Aorta (tissue), 5 donors: ENCODE measurements at regions of chr4 and their contacts with region 1.

Region 1: DNA sequence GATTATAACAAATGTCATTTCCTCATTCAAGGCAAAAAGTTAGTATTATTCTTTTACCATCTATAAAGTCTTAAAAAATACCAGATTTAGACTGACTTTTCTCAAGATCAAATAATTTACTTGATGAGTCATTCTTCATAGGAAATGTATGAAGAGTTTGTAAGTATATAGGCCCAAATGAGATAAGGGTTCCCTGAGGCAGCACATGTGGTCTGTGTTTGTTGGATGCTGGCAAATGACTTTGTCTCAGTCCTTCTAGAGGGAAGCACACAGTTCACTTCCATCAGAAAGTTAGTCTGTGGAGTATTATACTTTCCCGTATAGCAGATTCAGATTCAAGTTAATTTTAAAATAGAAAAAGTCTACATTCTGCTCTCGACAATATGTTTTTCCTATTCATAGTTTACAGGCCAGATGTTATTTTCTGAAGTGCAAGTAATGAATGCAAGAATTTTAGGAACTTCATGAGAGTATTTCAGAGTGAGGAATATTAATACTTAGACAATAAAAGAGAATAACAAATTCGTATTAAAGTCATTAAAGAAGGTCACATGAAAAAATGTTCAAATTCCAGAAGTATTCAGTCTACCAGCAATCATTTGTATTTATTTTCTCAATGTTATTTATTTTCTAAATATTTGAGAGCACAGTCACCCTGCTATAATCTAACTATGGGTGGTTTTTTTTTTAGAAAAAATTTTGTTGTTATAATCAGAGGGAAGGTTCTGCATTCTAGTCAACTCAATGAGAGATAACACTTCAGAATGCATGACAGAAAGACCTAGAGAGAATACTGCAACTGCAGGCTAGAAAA is 601.8 kb upstream of the ZFP42 start:
- DNase-seq: no peak
- ATAC-seq: no peak
- H3K4me3 ChIP-seq: no peak overlapping the region
- H3K27ac ChIP-seq: no peak overlapping the region
- H3K4me1 ChIP-seq: peaks cover 0 to 2% of the 10 kb centered on the region in 2 donors
- H3K27me3 ChIP-seq: no peaks in the 10 kb centered on the region

Region 2: DNA sequence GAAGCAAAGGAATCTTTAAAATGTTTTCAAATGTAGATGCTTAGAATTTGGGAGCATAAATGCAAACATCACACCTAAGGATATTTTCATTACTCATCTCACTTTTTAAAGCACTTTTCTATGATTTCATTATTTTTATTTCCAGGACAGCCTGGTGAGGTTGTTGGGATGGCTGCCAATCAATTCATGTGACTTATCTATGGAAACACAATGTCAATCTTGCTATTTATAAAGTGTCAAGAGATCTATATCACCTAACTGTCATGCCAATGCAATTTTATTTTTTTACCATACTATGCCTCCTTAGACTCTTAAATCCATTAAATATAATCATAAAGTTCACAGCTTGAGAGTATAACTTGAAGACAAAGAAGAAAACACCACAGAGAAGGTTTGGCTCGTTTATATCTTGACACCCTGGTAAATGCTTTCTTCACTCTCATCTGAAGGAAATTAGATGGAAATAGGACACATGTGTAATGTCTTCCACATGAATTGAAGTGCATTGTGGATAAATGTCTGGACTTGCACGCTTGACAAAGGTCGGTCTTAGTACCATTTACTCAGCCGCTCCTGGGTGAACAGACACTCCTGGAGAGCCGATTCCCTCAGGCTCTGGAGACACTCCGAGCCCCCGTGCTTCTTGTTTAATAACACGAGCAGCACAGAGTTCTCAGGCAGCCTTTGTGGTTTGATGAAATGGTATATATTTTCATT is 244.4 kb before region 1 on chr4:
- intact Hi-C with region 1: no loop called
- DNase-seq: no peak
- ATAC-seq: no peak
- H3K4me3 ChIP-seq: no peak overlapping the region
- H3K27ac ChIP-seq: no peak overlapping the region
- H3K4me1 ChIP-seq: no peaks in the 10 kb centered on the region
- H3K27me3 ChIP-seq: no peaks in the 10 kb centered on the region

Region 3: GRCh38 chr4:187576751-187577150 is 183.0 kb after region 1 on chr4:
- intact Hi-C with region 1: loop called in 1 of 2 experiments (anchors 10 kb)
- DNase-seq: no peak
- ATAC-seq: no peak
- H3K4me3 ChIP-seq: no peak overlapping the region
- H3K27ac ChIP-seq: no peak overlapping the region
- H3K4me1 ChIP-seq: no peaks in the 10 kb centered on the region
- H3K27me3 ChIP-seq: no peaks in the 10 kb centered on the region